Prostate gland (tissue), 2 donors: ENCODE measurements at regions of chr11 and their contacts with region 1.

Region 1: DNA sequence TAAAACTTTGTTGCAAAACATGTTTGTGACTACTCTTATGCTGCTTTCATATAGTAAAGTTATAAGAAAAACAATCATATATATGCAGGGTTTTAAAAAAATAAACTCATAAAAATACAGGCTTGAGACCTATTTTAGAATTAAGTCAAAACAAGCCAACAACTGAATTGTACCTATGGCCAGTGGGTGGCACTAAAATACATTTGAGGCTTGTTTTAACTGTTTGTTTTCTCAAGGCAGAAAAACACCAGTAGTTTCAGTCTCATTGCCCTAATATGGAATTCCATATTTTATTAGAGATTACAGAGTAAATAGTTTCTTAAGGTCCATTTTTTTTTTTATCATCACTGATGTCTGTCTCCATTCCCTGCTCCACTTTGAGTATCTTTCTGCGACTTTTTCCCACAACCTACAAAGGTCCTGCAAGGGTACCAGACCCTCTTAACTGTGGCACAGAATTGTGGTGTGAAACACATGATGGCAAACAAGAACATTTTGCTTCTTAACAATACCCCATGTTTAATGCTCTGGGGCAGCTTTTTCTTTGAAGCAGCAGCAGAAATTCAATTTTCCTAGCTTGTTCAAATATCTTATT is 8.5 kb upstream of the CCDC89 start:
- DNase-seq: no peak
- H3K4me3 ChIP-seq: no peak overlapping the region
- H3K27ac ChIP-seq: no peak overlapping the region
- H3K4me1 ChIP-seq: no peaks in the 10 kb centered on the region
- H3K27me3 ChIP-seq: no peaks in the 10 kb centered on the region
- CTCF ChIP-seq: peak in 3 of 4 experiments; percentile 52 to 70 (median 67)
- POLR2A ChIP-seq: no peak

Region 2: GRCh38 chr11:86218125-86219084 is 523.9 kb after region 1 on chr11:
- intact Hi-C with region 1: loop called (anchors 10 kb)
- DNase-seq: peak; percentile 46
- H3K4me3 ChIP-seq: no peak overlapping the region
- H3K27ac ChIP-seq: no peak overlapping the region
- H3K4me1 ChIP-seq: no peaks in the 10 kb centered on the region
- H3K27me3 ChIP-seq: no peaks in the 10 kb centered on the region
- CTCF ChIP-seq: peak; percentile 42 to 85 (median 78)
- POLR2A ChIP-seq: no peak